Activated naive CD4-positive, alpha-beta T cell treated with anti-CD3 and anti-CD28 coated beads, Interleukin-2, amount 10 ng/mL, durations not matched to agents 7 days and 5 days (primary cell): ENCODE measurements at regions of chr14 and their contacts with region 1.

Region 1: GRCh38 chr14:87944987-87945604 is 47.9 kb downstream of the GALC start:
- DNase-seq: no peak
- H3K4me3 Mint-ChIP-seq: no peak overlapping the region
- H3K27ac Mint-ChIP-seq: no peak overlapping the region
- H3K4me1 Mint-ChIP-seq: no peaks in the 10 kb centered on the region
- H3K27me3 Mint-ChIP-seq: no peaks in the 10 kb centered on the region

Region 2: GRCh38 chr14:87966816-87967215 is 21.7 kb after region 1 on chr14:
- CTCF ChIA-PET with region 1: no interaction called
- DNase-seq: no peak
- H3K4me3 Mint-ChIP-seq: no peak overlapping the region
- H3K27ac Mint-ChIP-seq: no peak overlapping the region
- H3K4me1 Mint-ChIP-seq: no peaks in the 10 kb centered on the region
- H3K27me3 Mint-ChIP-seq: no peaks in the 10 kb centered on the region

Region 3: GRCh38 chr14:88168498-88169165 is 223.5 kb after region 1 on chr14:
- CTCF ChIA-PET with region 1: interaction called, 39 read pairs
- DNase-seq: peak; percentile 66
- H3K4me3 Mint-ChIP-seq: no peak overlapping the region
- H3K27ac Mint-ChIP-seq: no peak overlapping the region
- H3K4me1 Mint-ChIP-seq: peaks cover 7% of the 10 kb centered on the region
- H3K27me3 Mint-ChIP-seq: peaks cover 31% of the 10 kb centered on the region